Posterior vena cava (tissue), 2 donors: ENCODE measurements at regions of chr12 and their contacts with region 1.

Region 1: GRCh38 chr12:111024205-111024801 is 103.9 kb upstream of the MYL2 start:
- DNase-seq: no peak

Region 2: DNA sequence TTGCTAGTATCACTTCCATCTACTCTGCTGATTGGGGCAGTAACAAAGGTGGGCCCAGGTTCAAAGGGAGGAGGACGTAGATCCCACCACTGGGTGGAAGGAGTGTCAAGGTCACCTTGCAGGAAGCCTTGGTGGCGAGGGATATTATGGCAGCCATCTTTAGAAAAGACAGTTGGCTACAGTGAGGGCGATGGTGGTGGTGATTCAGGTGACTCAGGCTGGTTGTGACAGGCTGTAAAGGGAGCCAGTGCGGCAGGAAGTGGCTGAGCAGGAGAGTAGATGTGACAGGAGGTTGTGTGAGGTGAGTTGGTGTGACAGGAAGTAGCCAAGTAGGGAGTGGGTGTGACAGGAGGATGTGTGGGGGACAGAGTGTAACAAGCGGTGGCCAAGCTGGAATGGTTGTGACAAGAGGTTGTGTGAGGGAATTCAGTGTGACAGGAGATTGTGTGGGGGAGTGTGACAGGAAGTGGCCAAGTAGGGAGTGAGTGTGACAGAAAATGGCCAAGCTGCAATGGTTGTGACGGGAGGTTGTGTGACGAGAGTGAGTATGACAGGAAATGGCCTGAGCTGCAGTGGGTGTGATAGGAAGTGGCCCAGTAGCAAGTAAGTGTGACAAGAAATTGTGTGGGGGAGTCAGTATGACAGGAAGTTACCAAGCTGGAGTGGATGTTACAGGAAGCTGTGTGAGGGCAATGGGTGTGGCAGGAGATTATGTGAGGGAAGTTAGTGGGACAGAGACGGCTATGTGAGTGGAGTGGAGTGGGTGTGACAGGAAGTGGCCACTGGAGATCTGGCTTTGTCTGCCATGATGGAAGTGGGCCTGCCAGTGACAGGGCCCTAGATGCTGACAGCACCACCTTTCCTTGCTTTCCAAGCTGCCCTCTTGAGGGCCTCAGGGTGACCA is 32.6 kb after region 1 on chr12:
- intact Hi-C with region 1: no loop called
- DNase-seq: no peak

Region 3: DNA sequence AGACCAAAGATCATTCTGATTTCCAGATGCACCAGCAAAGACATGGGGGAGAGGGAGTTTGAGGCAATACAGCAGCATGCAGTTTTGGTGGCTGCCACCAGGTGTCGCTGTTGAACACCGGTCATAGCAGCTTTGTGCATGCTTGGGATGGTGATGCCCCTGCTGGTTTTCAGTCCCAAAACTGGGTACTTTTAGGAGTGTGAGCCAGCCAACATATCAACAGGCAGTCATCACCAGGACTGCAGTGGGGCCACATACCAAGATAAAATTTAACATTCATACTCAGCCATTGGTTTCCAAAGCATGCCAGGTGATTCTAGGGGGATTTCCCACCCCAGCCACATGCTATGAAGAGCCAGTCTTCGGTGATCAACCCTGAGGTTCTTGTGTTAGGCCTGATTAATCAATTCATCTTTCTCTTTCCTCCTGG is 280.4 kb after region 1 on chr12:
- intact Hi-C with region 1: loop called in 1 of 2 experiments (anchors 10 kb)
- DNase-seq: no peak